ENCODE measurements at regions of chr18 and their contacts with region 1.

Region 1: GRCh38 chr18:36706134-36706881 is 122.5 kb downstream of the TPGS2 start:
- DNase-seq: no peak
- H3K4me3 ChIP-seq: no peak overlapping the region
- H3K27ac ChIP-seq: no peak overlapping the region
- H3K4me1 ChIP-seq: no peaks in the 10 kb centered on the region
- H3K27me3 ChIP-seq: no peaks in the 10 kb centered on the region
- CTCF ChIP-seq: no peak
- EP300 ChIP-seq: no peak
- POLR2A ChIP-seq: no peak

Region 2: DNA sequence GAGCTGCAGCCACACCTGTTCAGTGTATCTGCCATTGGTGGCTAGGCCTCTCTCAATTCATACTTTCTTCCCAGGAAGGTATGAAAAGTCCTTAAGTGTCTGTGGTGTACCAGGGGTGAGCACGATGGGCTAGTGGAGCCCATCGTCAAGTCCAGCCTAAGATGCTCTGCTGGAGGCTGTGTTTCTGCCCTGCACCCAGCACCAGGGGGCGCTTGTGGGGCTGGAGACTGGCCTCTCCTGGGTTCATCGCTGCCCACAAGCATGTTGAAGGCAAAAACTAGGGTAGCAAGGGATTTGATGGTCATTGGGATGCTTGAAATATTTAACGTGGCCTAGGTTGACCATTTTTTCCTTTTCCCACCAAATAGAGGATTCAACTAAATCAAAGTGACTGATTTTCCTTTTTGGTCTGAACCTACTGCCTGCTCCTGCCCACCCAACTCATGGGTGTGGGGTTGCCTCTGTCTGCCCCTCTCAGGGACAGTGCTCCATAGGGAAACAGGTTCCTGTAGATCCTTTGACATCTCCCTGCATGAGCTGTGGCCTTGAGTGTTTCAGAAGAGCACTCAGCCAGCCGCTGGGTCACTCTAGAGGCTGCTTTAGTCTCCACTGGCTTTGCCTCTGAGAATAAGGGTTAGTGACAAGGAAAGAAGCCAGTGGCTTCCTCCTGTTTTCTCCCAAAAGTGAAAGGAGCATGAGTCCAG is 63.5 kb after region 1 on chr18:
- intact Hi-C with region 1: loop called in 1 of 4 experiments (anchors 10 kb)
- DNase-seq: no peak
- H3K4me3 ChIP-seq: no peak overlapping the region
- H3K27ac ChIP-seq: no peak overlapping the region
- H3K4me1 ChIP-seq: no peaks in the 10 kb centered on the region
- H3K27me3 ChIP-seq: no peaks in the 10 kb centered on the region
- CTCF ChIP-seq: no peak
- EP300 ChIP-seq: no peak
- POLR2A ChIP-seq: no peak

Region 3: GRCh38 chr18:36809590-36810381 is 103.5 kb after region 1 on chr18:
- intact Hi-C with region 1: loop called in 1 of 4 experiments (anchors 10 kb)
- DNase-seq: peak in 3 of 5 donors; percentile 11 to 30 (median 26)
- H3K4me3 ChIP-seq: no peak overlapping the region
- H3K27ac ChIP-seq: no peak overlapping the region
- H3K4me1 ChIP-seq: peaks cover 6% of the 10 kb centered on the region
- H3K27me3 ChIP-seq: no peaks in the 10 kb centered on the region
- CTCF ChIP-seq: peak; percentile 47 to 59 (median 54)
- EP300 ChIP-seq: no peak
- POLR2A ChIP-seq: no peak